ENCODE measurements at regions of chr1 and their contacts with region 1.

Region 1: GRCh38 chr1:222634180-222635013 is 16.5 kb downstream of the MIA3 start:
- DNase-seq: no peak
- ATAC-seq: peak; percentile 85
- H3K4me3 Mint-ChIP-seq: no peak overlapping the region
- H3K27ac Mint-ChIP-seq: no peak overlapping the region
- H3K4me1 Mint-ChIP-seq: peaks cover 17% of the 10 kb centered on the region
- H3K27me3 Mint-ChIP-seq: no peaks in the 10 kb centered on the region
- CTCF ChIP-seq: no peak

Region 2: DNA sequence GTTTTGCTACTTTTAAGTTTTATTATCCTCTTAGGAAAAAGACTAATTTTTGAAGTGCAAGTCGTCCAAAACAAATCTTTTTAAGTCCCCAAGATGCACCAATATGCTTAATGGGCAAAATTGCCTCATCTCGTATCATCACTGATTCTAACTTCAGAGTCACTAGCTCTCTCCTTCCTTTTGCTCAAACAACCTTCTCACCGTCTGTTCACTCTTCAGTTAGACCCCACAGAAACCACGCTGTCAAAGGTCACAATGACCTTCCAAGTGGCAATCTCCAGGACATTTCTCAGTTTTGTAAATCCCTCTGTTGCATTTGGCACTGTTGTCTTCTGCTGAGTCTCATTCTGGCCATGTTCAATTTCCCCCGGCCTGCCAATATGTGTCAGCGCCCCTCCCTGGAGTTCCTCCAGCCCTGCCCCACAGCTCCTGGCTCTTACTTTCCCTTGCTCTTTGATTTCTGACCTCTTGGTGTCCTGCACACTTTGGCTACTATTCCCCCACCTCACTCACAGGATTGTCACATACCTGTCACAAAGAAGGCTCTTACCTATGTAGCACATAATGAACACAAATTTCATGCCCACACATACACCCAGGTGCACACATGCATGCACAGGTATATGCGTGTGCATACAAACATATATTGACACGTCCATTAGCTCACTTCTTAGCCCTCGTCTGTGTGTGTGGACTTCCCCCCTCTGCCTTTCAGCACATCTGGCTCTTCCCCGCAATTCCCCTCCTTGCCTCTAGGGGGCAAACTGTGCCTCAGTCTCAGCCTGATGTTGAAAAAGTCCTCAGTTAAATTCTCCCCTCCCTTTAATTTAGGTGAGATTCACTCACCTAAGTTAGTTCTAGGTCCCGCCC is 538.6 kb before region 1 on chr1:
- CTCF ChIA-PET with region 1: no interaction called
- POLR2A ChIA-PET with region 1: no interaction called
- intact Hi-C with region 1: loop called (anchors 10 kb)
- DNase-seq: no peak
- ATAC-seq: peak; percentile 82
- H3K4me3 Mint-ChIP-seq: no peak overlapping the region
- H3K27ac Mint-ChIP-seq: no peak overlapping the region
- H3K4me1 Mint-ChIP-seq: no peaks in the 10 kb centered on the region
- H3K27me3 Mint-ChIP-seq: peaks cover 7% of the 10 kb centered on the region
- CTCF ChIP-seq: peak; percentile 53

Region 3: DNA sequence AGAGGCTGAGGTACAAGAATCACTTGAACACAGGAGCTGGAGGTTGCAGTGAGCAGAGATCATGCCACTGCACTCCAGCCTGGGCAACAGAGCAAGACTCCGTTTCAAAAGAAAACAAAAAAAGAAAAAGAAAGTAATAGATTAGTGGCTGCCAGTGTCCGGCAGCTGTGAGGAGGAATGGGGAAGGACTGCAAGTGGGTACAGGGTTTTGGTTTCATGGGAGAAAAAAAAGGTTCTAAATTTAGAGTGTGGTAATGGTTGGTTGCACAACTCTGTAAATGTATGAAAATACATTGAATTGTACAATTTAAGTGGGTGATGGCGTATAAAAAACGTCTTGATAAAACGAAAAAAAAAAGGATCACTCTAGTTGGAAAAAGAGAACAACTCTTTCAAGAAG is 51.3 kb before region 1 on chr1:
- CTCF ChIA-PET with region 1: interaction called, 6 read pairs
- POLR2A ChIA-PET with region 1: interaction called, 3 read pairs
- intact Hi-C with region 1: loop called (anchors 1 kb)
- DNase-seq: no peak
- ATAC-seq: peak; percentile 77
- H3K4me3 Mint-ChIP-seq: peak overlapping the region; percentile 81
- H3K27ac Mint-ChIP-seq: peak overlapping the region; percentile 93
- H3K4me1 Mint-ChIP-seq: peaks cover 74% of the 10 kb centered on the region
- H3K27me3 Mint-ChIP-seq: no peaks in the 10 kb centered on the region
- CTCF ChIP-seq: no peak

Region 4: DNA sequence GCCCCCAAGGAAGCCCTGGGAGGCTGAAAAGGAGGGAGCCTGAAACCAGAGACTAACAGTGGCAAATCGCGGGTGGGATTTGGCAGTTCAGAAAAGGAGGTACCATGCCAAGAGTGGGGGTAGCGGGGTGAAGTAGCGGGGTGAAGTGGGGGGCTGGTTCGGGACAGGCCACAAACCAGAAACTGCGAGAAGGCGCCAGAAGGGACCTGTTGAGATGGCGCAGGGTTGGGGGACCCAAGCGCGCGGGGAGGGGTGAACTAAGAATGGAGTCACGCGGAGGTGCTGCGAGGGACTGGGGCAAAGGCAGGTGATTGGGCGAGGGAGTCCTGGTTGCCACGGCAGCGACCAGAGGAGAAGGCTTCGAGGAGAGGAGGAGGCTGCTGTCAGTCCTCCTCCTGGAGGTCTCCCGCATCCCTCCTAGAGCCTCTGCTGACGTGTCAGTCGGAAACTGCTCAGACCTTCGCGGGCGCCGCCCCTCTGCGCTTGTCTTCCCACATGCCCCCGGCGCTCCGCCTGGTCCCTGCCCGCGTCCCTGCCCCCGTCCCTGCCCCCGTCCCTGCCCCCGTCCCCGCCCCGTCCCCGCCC is 16.9 kb before region 1 on chr1:
- CTCF ChIA-PET with region 1: interaction called, 15 read pairs
- POLR2A ChIA-PET with region 1: interaction called, 9 read pairs
- intact Hi-C with region 1: loop called (anchors 1 kb)
- DNase-seq: peak; percentile 80
- ATAC-seq: peak; percentile 92
- H3K4me3 Mint-ChIP-seq: peak overlapping the region; percentile 93
- H3K27ac Mint-ChIP-seq: peak overlapping the region; percentile 91
- H3K4me1 Mint-ChIP-seq: peaks cover 28% of the 10 kb centered on the region
- H3K27me3 Mint-ChIP-seq: peaks cover 20% of the 10 kb centered on the region
- CTCF ChIP-seq: no peak

Region 5: DNA sequence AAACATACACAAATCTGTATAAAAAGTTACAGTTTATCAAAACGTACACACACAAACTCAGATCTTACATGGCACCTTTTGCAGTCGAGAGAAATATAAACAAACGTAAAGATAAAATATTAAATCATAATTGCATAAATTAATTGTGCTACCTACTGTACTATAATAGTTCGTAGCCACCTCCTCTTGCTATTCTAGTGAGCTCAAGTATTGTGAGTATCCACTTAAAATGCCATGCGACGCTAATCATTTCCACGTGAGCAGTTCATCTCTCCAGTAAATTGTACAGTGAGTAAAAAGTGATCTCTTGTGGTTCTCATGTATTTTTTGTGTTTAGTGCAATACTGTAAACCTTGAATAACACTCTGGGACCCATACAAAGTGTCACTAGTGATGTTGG is 10.2 kb before region 1 on chr1:
- CTCF ChIA-PET with region 1: interaction called, 15 read pairs
- POLR2A ChIA-PET with region 1: interaction called, 6 read pairs
- intact Hi-C with region 1: loop called (anchors 1 kb)
- DNase-seq: no peak
- ATAC-seq: no peak
- H3K4me3 Mint-ChIP-seq: no peak overlapping the region
- H3K27ac Mint-ChIP-seq: no peak overlapping the region
- H3K4me1 Mint-ChIP-seq: peaks cover 14% of the 10 kb centered on the region
- H3K27me3 Mint-ChIP-seq: no peaks in the 10 kb centered on the region
- CTCF ChIP-seq: no peak

Region 6: DNA sequence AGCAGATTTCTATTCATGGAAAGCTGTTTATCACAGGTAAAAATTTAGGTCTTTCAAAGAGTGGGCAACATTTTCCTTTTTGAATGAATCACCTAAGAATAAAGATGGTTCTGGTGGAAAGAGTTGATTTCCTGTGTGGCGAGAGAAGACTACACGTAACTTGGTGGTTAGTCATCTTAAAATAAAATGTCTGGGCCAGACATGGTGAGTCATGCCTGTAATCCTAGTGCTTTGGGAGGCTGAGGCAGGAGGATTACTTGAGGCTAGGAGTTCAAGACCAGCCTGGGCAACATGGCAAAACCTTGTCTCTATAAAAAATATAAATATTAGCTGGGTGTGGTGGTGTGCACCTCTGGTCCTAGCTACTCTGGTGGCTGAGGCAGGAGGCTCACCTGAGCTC is 246.2 kb after region 1 on chr1:
- CTCF ChIA-PET with region 1: no interaction called
- POLR2A ChIA-PET with region 1: no interaction called
- intact Hi-C with region 1: no loop called
- DNase-seq: no peak
- ATAC-seq: no peak
- H3K4me3 Mint-ChIP-seq: no peak overlapping the region
- H3K27ac Mint-ChIP-seq: no peak overlapping the region
- H3K4me1 Mint-ChIP-seq: peaks cover 11% of the 10 kb centered on the region
- H3K27me3 Mint-ChIP-seq: no peaks in the 10 kb centered on the region
- CTCF ChIP-seq: no peak

Region 7: GRCh38 chr1:223081181-223081994 is 447.0 kb after region 1 on chr1:
- CTCF ChIA-PET with region 1: interaction called, 4 read pairs
- POLR2A ChIA-PET with region 1: no interaction called
- intact Hi-C with region 1: loop called (anchors 1 kb)
- DNase-seq: peak; percentile 71
- ATAC-seq: peak; percentile 99
- H3K4me3 Mint-ChIP-seq: peak overlapping the region; percentile 83
- H3K27ac Mint-ChIP-seq: peak overlapping the region; percentile 80
- H3K4me1 Mint-ChIP-seq: peaks cover 3% of the 10 kb centered on the region
- H3K27me3 Mint-ChIP-seq: peaks cover 5% of the 10 kb centered on the region
- CTCF ChIP-seq: peak; percentile 92

Measured in activated B cell treated with CpG ODN at 0.5 μM for 24 hours (primary cell).